ENCODE measurements at regions of chr5 and their contacts with region 1.

Region 1: GRCh38 chr5:178602752-178603151 is 12.6 kb upstream of the COL23A1 start:
- DNase-seq: no peak
- H3K4me3 ChIP-seq: no peak overlapping the region
- H3K27ac ChIP-seq: peak overlapping the region in 1 of 4 donors; percentile 47
- H3K4me1 ChIP-seq: no peaks in the 10 kb centered on the region
- H3K27me3 ChIP-seq: no peaks in the 10 kb centered on the region
- CTCF ChIP-seq: no peak
- EP300 ChIP-seq: no peak
- POLR2A ChIP-seq: no peak

Region 2: DNA sequence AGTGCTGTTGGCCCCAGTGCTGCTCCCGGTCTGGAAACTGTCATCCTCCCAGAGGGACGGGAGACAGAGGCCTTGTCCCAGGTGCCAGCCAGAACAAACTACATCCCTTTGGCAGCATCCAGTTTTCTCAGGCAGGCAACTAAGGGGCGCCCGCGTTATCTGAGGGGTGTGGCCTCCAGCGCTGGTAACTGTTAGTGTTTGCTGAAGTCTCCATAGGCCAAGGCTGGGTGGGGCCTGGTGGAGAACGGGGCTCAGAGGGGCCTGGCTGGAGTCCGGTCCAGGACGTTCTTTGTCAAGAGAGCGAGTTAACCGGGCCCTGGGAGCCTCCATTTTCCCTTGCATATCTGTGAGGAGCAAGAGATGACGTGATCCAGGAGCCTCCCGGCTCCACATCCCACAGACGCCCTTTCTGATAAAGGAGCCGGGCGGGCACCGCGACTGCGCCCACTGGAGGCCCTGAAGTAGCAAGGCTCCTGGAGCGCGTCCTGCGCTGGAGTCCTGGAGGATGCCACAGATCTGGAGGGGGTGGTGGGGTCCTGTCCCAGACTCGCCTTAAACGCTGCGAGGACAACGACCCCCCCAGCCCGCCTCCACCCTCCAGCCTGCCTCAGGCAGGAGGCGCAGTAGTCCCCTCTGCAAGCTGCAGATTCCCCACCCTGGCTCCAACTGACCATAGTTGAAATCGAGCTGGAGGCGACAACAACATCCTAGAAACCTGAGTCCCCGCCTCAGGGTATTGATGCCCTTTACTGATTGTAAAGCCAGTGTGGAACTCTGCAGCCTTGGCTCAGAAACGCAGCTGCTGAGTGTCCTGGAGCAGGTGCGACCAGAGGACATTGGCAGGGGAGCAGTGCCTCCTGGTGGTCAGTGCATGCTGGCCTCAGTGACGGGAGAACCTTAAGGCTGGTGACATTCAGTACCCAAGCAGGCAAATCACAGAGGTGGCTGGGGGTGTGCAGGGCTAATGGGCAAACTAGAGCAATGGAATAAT is 236.2 kb after region 1 on chr5:
- in situ Hi-C with region 1: no loop called
- intact Hi-C with region 1: no loop called
- DNase-seq: peak; percentile 46
- H3K4me3 ChIP-seq: no peak overlapping the region
- H3K27ac ChIP-seq: no peak overlapping the region
- H3K4me1 ChIP-seq: no peaks in the 10 kb centered on the region
- H3K27me3 ChIP-seq: no peaks in the 10 kb centered on the region
- CTCF ChIP-seq: peak; percentile 18 to 60 (median 53)
- EP300 ChIP-seq: no peak
- POLR2A ChIP-seq: no peak

Region 3: GRCh38 chr5:179878222-179879009 is 1275.7 kb after region 1 on chr5:
- in situ Hi-C with region 1: no loop called
- intact Hi-C with region 1: loop called (anchors 5 kb)
- DNase-seq: no peak
- H3K4me3 ChIP-seq: no peak overlapping the region
- H3K27ac ChIP-seq: no peak overlapping the region
- H3K4me1 ChIP-seq: no peaks in the 10 kb centered on the region
- H3K27me3 ChIP-seq: no peaks in the 10 kb centered on the region
- CTCF ChIP-seq: no peak
- EP300 ChIP-seq: no peak
- POLR2A ChIP-seq: no peak

Measured in transverse colon (tissue), 4 donors.